ENCODE measurements at regions of chr2 and their contacts with region 1.

Region 1: GRCh38 chr2:47189635-47190034 is 34.5 kb upstream of the STPG4 start:
- DNase-seq: no peak

Region 2: GRCh38 chr2:46257476-46257875 is 932.2 kb before region 1 on chr2:
- intact Hi-C with region 1: no loop called
- DNase-seq: no peak

Region 3: GRCh38 chr2:47173986-47174732 is 15.5 kb before region 1 on chr2:
- intact Hi-C with region 1: no loop called
- DNase-seq: no peak

Region 4: DNA sequence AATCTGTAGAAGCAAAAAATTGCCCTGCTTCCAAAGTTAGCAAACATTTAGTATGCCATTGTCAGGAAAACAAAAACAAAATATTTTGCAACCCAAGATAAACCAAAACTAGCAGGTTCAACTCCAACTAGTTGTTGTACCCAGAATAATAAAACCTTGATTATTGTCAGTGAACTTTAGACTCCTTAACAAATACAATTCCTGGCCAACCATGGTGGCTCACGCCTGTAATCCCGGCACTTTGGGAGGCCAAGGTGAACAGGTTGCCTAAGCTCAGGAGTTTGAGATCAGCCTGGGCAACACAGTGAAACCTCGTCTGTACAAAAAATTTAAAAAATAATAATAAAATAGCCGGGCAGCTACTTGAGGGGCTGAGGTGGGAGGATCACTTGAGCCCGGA is 125.8 kb after region 1 on chr2:
- intact Hi-C with region 1: loop called (anchors 5 kb)
- DNase-seq: peak in 1 of 10 donors; percentile 10